IMR-90 (cell line): ENCODE measurements at regions of chr12 and their contacts with region 1.

Region 1: DNA sequence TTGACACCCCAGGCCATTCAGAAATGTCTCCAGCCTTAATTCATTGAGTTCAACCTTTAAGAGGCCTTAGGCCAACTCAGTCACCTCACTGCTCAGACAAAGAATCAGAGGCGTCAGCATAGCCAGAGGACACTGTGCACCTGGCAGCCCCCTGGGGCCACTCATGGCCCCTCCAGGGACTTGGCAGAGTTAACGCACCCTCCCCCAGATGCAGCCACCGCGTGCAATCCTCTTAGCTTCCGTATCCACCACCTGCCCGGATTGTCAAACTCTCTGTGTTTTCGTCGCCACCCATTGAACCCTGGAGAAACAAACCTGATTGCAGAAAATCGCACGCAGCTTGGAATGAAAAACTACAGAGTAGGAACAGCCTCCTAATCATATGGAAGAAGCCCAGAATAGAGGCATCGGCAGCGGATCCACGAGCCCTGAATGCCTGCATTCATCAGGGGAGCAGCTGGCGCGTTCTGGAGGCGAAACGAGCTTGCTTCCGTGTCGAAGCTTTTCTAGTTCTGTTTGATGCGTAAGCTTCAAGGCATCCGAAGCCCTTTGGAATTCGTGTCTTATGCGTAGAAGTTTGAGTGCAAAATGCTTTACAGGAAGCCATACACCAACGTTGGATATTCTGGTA is 22.4 kb downstream of the BRI3BP start:
- DNase-seq: no peak
- ATAC-seq: no peak
- H3K4me3 ChIP-seq: no peak overlapping the region
- H3K27ac ChIP-seq: no peak overlapping the region
- H3K4me1 ChIP-seq: no peaks in the 10 kb centered on the region
- H3K27me3 ChIP-seq: no peaks in the 10 kb centered on the region
- CTCF ChIP-seq: no peak
- POLR2A ChIP-seq: no peak
- RAD21 ChIP-seq: no peak

Region 2: DNA sequence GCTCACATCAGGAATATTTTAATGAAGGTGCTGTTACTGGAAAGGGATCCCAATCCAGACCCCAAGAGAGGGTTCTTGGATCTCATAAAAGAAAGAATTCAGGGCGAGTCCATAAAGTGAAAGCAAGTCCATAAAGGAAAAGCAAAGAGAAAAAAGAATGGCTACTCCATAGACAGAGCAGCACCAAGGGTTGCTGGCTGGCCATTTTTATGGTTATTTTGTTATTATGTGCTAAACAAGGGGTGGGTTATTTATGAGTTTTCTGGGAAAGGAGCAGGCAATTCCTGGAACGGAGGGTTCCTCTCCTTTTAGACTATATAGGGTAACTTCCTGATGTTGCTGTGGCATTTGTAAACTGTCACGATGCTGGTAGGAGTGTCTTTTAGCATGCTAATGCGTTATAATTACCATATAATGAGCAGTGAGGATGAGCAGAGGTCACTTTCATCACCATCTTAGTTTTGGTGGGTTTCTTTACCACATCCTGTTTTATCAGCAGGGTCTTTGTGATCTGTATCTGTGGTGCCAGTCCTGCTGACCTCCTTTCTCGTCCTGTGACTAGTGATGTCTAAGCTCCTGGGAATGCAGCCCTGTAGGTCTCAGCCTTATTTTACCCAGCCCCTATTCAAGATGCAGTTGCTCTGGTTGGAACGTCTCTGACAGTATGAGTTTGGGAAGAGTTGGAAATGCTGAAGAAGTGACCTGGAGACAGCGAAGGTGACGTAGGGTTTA is 942.3 kb before region 1 on chr12:
- CTCF ChIA-PET with region 1: no interaction called
- POLR2A ChIA-PET with region 1: interaction called, 17 read pairs
- dilution Hi-C with region 1: no loop called
- in situ Hi-C with region 1: no loop called
- intact Hi-C with region 1: no loop called
- DNase-seq: no peak
- ATAC-seq: no peak
- H3K4me3 ChIP-seq: no peak overlapping the region
- H3K27ac ChIP-seq: no peak overlapping the region
- H3K4me1 ChIP-seq: no peaks in the 10 kb centered on the region
- H3K27me3 ChIP-seq: peaks cover 10% of the 10 kb centered on the region
- CTCF ChIP-seq: no peak
- POLR2A ChIP-seq: no peak
- RAD21 ChIP-seq: no peak

Region 3: DNA sequence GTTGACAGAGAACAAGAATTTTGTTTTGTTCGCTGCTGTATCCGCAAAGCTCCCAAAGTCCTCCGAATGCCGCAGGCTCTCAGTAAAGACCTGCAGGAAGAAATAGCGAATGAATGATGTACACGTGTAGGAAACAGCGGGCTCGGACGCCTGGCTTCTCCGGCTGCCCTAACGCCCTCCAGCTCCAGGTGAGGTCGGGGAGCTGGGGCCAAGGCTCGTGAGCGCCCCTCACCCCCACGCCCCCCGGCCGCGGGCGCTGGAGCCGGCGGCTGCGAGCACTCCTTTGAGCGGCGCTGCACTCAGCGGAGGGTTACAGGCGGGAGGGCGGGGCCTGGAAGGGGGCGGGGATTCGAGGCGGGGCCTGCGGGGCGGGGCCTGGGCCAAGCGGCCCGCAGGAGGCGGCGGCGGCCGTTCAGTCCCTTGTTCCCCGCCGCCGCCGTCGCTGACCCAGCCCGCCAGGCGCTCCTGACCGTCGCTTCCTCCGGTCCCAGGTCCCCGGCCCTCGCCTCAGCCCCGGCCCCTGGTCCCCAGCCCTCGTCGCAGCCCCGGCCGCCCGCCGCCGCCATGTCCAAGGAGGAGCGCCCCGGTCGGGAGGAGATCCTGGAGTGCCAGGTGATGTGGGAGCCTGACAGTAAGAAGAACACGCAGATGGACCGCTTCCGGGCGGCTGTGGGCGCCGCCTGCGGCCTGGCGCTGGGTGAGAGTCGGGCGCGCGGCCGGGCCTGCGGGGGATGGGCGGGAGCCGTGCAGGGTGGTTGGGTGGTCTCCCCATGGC is 49.4 kb after region 1 on chr12 and contains the start of gene AACS:
- CTCF ChIA-PET with region 1: no interaction called
- POLR2A ChIA-PET with region 1: no interaction called
- dilution Hi-C with region 1: no loop called
- in situ Hi-C with region 1: no loop called
- intact Hi-C with region 1: no loop called
- DNase-seq: peak; percentile 64
- ATAC-seq: peak; percentile 99
- H3K4me3 ChIP-seq: peak within 1 kb of the TSS; percentile 90
- H3K27ac ChIP-seq: peak within 1 kb of the TSS; percentile 42; the same call in 1 of the 2 replicates
- H3K4me1 ChIP-seq: peaks cover 3% of the 10 kb centered on the region
- H3K27me3 ChIP-seq: no peaks in the 10 kb centered on the region
- CTCF ChIP-seq: no peak
- POLR2A ChIP-seq: peak; percentile 67; the same call in 1 of the 2 replicates
- RAD21 ChIP-seq: no peak
- total RNA-seq, gene AACS: 21.1 and 22.0 TPM in 2 replicates